Calu3 (cell line): ENCODE measurements at regions of chr3 and their contacts with region 1.

Region 1: DNA sequence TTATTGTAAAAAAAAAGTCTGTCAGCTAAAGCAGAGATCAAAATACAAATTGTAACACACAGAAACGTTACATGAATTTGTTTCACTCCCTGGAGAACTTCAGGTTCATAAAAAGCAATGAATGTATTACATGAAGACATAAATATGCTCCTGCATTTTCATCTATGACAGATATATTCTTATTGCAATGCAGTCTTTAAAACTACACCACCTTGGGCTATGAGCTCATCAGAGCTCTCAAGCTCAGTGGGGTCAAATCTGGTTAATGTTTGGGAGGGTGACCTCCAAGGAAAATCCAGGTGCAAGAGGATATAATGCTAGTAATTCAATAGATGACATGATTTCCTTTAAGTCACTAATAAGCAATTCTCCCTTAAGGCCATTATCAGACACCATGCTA is 606.8 kb downstream of the EPHA3 start:
- DNase-seq: no peak
- H3K4me3 Mint-ChIP-seq: no peak overlapping the region
- H3K27ac Mint-ChIP-seq: no peak overlapping the region
- H3K4me1 Mint-ChIP-seq: no peaks in the 10 kb centered on the region
- H3K27me3 Mint-ChIP-seq: no peaks in the 10 kb centered on the region
- CTCF ChIP-seq: no peak

Region 2: DNA sequence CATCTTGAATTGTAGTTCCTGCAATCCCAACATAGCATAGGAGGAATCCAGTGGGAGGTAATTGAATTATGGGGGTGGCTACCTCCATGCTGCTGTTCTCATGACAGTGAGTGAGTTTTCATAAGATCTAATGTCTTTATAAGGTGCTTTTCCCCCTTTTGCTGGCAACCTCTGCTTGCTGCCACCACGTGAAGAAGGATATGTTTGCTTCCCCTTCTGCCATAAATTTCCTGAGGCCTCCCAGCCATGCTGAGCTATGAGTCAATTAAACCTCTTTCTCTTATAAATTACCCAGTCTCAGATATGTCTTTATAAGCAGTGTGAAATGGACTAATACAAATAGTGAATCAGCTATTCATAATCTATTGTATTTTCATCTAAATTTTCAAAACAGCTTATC is 69.5 kb before region 1 on chr3:
- CTCF ChIA-PET with region 1: no interaction called
- intact Hi-C with region 1: no loop called
- DNase-seq: no peak
- H3K4me3 Mint-ChIP-seq: no peak overlapping the region
- H3K27ac Mint-ChIP-seq: no peak overlapping the region
- H3K4me1 Mint-ChIP-seq: peaks cover 20% of the 10 kb centered on the region
- H3K27me3 Mint-ChIP-seq: no peaks in the 10 kb centered on the region
- CTCF ChIP-seq: no peak

Region 3: GRCh38 chr3:89762405-89762804 is 48.2 kb after region 1 on chr3:
- CTCF ChIA-PET with region 1: no interaction called
- intact Hi-C with region 1: loop called (anchors 10 kb)
- DNase-seq: no peak
- H3K4me3 Mint-ChIP-seq: no peak overlapping the region
- H3K27ac Mint-ChIP-seq: no peak overlapping the region
- H3K4me1 Mint-ChIP-seq: peaks cover 6% of the 10 kb centered on the region
- H3K27me3 Mint-ChIP-seq: no peaks in the 10 kb centered on the region
- CTCF ChIP-seq: no peak

Region 4: DNA sequence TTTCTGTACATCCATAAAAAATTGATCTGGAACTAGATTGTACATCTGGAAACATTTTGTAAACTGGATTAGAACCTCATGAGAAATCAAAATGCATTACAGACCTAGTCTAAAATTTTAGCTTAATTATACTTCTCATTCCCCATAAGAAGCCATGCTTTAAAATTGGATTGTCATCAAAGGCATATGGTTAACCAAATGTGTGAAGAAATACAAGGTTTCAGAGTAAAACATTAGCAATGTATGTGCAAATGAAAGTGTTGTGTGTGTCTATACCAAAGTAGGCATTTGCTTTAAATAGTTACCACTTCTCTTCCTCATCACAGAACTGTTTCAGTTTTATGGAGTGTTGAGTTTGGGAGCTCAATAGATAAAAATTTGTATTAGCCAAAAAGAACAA is 361.9 kb after region 1 on chr3:
- CTCF ChIA-PET with region 1: no interaction called
- intact Hi-C with region 1: no loop called
- DNase-seq: no peak
- H3K4me3 Mint-ChIP-seq: no peak overlapping the region
- H3K27ac Mint-ChIP-seq: no peak overlapping the region
- H3K4me1 Mint-ChIP-seq: no peaks in the 10 kb centered on the region
- H3K27me3 Mint-ChIP-seq: no peaks in the 10 kb centered on the region
- CTCF ChIP-seq: no peak